ENCODE measurements at regions of chr2 and their contacts with region 1.

Region 1: GRCh38 chr2:173652767-173653431 is 298.2 kb downstream of the CDCA7 start:
- DNase-seq: peak; percentile 99
- ATAC-seq: peak; percentile 99
- H3K4me3 ChIP-seq: peak overlapping the region; percentile 50
- H3K27ac ChIP-seq: peak overlapping the region; percentile 97
- H3K4me1 ChIP-seq: peaks cover 27% of the 10 kb centered on the region
- H3K27me3 ChIP-seq: no peaks in the 10 kb centered on the region
- CTCF ChIP-seq: no peak

Region 2: DNA sequence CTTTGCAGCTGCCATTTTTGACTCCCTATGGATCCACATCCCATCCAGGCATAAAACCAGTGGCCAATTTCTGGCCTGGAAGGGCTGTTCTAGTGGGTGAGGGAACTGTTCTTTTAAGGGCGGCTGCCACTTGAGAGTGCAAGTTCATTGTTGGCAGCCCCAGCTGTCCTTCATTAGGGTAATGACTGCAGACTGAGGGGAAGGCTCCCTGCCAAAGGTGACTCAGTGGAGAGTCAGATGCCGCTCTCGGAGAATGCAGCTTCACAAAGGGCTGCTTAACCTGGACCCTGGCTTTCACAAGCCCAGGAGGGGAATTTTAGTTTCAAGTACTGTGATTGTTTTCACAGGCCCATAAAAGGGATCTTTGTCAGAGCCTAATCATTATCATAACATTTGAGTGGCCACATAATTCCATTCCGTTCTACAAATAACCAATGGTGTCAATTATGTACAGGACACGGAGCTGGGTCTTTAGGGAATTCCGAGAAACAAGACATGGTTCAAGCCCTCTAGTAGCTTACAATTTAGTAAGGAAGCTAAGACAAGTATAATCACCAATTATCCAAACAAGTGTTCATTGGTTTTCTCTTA is 62.5 kb before region 1 on chr2:
- CTCF ChIA-PET with region 1: no interaction called
- POLR2A ChIA-PET with region 1: no interaction called
- intact Hi-C with region 1: loop called (anchors 1 kb)
- DNase-seq: peak; percentile 98
- ATAC-seq: peak; percentile 86
- H3K4me3 ChIP-seq: peak overlapping the region; percentile 59
- H3K27ac ChIP-seq: peak overlapping the region; percentile 98
- H3K4me1 ChIP-seq: peaks cover 36% of the 10 kb centered on the region
- H3K27me3 ChIP-seq: no peaks in the 10 kb centered on the region
- CTCF ChIP-seq: no peak

Region 3: DNA sequence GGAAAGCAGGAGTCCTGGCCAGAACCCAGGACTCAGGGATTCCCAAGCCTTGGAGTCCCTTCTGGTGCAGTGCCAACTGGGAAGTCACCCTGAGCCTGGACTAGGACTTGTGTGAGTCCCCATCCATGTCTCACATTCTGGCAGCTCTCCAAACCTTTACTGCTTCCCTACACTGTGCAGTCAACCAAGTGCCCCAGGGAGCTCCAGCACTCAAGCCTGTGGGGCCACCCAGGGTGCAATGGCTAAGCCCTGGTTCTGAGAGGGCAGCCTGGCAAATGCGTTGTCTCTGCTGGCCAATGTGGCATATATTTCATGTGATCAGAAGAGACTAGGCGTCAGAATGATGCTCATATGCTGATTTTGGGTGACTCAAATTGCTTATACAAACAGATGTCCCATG is 88.9 kb after region 1 on chr2:
- CTCF ChIA-PET with region 1: no interaction called
- POLR2A ChIA-PET with region 1: no interaction called
- intact Hi-C with region 1: no loop called
- DNase-seq: peak; percentile 54
- ATAC-seq: no peak
- H3K4me3 ChIP-seq: no peak overlapping the region
- H3K27ac ChIP-seq: no peak overlapping the region
- H3K4me1 ChIP-seq: peaks cover 8% of the 10 kb centered on the region; the same call in 1 of the 2 replicates
- H3K27me3 ChIP-seq: no peaks in the 10 kb centered on the region
- CTCF ChIP-seq: no peak

Measured in PC-3 (cell line).